ENCODE measurements at regions of chr19 and their contacts with region 1.

Region 1: GRCh38 chr19:14689598-14690503 is at the start of gene ZNF333:
- DNase-seq: peak; percentile 80 to 99 (median 94)
- ATAC-seq: peak; percentile 99
- H3K4me3 ChIP-seq: peak within 1 kb of the TSS; percentile 81 to 90
- H3K27ac ChIP-seq: peak within 1 kb of the TSS; percentile 97 to 98
- H3K4me1 ChIP-seq: peaks cover 6 to 35% of the 10 kb centered on the region in 2 donors
- H3K27me3 ChIP-seq: no peaks in the 10 kb centered on the region
- CTCF ChIP-seq: no peak
- polyA plus RNA-seq, gene ZNF333: 29.6 to 38.7 (median 36.7) TPM

Region 2: DNA sequence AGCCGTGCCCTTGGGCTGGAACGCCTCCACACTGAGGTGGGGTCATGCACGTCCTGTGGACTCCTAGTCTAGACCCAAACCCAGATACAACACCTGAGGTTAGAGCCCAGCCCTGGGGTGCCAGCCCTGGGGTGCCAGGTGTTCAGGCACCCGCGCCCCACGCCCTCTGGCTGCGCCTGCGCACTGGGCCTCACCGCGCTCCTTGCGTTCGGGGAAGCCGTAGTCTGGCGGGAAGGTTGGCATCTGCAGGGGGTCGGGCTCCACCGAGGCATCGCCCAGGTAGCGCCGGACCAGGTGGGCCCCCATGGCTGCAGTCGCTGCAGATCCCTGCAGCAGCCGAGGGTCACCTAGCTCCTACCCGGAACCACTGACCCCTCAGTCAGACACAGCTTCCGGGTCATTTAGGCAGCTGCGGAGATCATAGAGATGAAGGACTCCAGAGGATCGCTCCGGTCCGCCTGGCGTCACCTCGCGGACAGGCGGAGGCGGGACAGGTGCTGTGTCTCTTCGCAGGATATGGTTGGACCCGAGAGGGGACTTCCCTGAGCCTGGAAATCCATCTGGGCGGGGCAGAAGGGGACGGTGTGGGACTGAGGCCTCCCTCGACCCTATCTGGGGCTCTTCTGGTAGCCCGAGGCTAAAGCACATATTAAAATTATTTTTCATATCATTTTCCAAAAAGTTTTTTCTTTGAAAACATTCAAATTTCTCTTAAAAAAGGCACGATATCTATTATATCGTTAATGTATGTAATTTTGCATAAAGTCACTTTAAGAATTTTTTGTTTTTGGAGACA is 118.0 kb before region 1 on chr19 and contains the start of gene NDUFB7:
- intact Hi-C with region 1: loop called in 1 of 2 experiments (anchors 10 kb)
- DNase-seq: peak; percentile 85 to 97 (median 93)
- ATAC-seq: peak; percentile 97
- H3K4me3 ChIP-seq: peak within 1 kb of the TSS; percentile 82 to 84
- H3K27ac ChIP-seq: peak within 1 kb of the TSS; percentile 53 to 73
- H3K4me1 ChIP-seq: peaks cover 14 to 39% of the 10 kb centered on the region in 2 donors
- H3K27me3 ChIP-seq: no peaks in the 10 kb centered on the region
- CTCF ChIP-seq: peak; percentile 68 to 69
- polyA plus RNA-seq, gene NDUFB7: 60.1 to 97.5 (median 78.9) TPM